Right ventricle myocardium superior (tissue), 1 donor: ENCODE measurements at regions of chr9 and their contacts with region 1.

Region 1: DNA sequence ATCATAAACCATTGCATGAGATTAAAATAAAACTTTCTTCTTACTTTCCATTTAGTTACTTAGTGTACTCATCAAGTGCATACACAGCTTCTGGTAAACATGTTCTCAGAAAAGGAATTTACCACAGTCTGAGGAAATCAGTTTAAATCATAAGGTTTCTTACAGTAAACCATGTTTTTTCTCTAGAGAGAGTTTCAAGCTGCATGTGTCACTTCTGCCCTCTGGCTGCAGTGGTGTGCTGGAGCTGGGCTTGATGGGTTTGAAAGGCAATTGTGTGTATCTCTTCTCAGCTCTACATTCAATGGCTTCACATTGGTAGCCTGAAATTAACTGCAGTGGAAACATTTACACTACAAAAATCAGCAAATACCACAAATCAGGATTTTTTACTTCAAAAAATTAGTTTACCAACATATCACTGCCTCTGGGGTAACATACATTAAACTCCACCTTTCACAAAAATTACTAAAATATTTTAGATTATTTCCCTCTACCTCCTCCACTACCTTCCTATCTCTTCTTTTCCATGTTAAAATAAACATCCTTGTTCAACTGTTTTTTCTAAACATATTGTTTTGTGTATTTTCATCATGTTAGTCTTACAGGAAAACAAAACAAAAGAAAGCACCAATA is 414.3 kb downstream of the ANXA1 start:
- DNase-seq: peak; percentile 54
- ATAC-seq: peak; percentile 68

Region 2: DNA sequence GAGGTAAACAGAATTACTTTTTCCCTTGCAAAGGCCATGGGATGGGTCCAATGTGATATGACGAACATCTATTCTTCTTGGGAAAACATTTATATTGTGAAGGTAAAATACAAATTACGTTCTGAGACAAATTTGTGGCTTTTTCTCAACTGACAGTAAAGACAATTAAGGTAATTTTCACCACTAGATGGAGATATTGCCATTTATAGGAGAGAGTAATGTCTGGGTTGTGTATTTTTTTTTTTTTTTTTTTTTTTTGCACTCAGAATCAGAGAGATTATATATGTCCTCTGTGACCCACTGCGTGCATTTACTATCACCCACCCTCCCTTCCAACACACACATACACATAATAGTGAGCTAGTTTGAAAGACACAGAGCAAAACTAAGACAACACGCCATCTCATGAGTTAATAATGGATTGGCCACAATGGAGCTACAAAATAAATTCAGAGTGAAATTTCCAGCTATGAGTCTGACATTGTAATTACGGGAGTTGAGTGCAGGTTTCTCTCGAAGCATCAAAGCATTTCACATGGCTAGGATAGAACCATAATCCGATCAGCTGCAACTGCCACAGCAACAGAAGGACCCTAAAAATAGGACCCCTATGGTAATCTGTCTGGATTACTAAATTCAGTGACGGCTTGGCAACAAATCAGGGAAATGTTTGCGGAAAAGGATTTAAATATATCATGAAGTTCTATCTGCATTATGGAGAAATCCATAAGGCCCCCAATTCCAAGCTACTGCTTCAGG is 365.1 kb before region 1 on chr9:
- intact Hi-C with region 1: loop called (anchors 10 kb)
- DNase-seq: no peak
- ATAC-seq: no peak

Region 3: GRCh38 chr9:73239570-73240267 is 326.2 kb before region 1 on chr9:
- intact Hi-C with region 1: no loop called
- DNase-seq: no peak
- ATAC-seq: no peak

Region 4: DNA sequence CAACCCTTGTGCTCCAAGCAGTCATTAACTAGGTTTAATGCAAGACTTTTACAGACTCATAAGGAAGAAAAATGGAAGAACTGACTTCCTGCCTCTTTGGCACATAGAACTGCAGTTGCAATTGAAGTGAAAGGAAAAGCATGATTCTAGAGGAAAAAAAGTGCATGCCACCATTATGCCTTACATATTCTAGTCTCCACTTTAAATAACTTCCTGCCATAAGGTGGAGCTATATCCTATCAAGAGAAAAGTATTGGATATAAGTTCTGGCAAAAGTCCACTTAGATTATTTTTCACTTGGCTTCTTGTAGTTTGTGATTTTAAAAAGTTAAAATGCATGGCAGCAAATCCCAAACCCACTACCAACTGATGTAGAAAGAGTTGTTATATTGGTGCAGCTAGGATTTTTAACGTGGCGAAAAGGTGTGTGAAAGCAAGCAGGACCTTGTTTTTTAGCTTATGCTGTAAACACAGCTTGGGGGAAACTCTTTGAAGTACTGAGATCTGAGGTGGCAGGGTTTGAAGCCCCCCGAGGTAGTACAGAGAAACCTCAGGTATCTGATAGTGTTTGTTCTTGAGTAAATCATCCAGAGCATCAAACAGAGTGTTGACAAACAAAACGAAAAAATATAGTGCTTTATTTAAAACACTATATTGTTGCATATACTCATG is 296.4 kb before region 1 on chr9:
- intact Hi-C with region 1: loop called (anchors 5 kb)
- DNase-seq: no peak
- ATAC-seq: peak; percentile 63

Region 5: GRCh38 chr9:74122661-74123060 is 556.7 kb after region 1 on chr9:
- intact Hi-C with region 1: no loop called
- DNase-seq: no peak
- ATAC-seq: no peak